Activated CD4-positive, alpha-beta memory T cell treated with anti-CD3 and anti-CD28 coated beads for 36 hours (primary cell): ENCODE measurements at regions of chr11 and their contacts with region 1.

Region 1: DNA sequence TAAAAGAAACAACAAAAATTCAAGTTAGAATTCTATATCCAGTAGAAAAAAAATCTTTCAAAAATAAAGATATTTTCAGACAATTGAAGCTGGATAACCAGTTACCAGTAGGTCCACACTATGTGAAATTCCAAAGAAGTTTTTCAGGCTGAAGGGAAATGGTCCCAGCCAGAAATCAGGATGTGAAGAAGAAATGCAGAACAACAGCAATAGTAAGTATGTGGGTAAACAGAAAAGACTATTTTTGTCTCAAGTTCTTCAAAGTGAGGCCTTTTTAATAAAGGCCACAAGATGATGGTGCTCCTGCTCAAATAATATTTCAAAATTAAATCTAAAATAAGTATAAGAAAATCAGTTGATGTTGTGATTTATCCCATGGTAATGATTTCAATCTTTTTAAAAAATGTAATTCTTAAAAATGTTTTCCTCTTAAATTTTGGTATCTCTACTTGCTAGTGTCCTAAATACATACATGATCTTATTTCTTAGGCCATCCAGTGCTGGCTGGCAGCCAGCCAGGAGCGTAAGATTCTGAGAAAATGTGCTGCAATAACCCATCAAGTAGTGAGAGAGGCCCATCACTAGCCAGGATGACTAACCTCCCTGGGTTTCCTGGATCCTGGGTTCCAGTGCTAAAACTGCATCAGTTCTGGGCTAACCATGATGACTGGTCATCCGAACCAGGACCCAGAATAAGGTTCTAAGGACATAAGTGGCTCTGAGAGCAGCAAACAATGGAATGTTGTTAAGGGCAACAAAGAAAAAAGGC is 15.6 kb upstream of the UCP3 start:
- DNase-seq: peak; percentile 83
- H3K4me3 Mint-ChIP-seq: no peak overlapping the region
- H3K27ac Mint-ChIP-seq: peak overlapping the region; percentile 61
- H3K4me1 Mint-ChIP-seq: peaks cover 38% of the 10 kb centered on the region
- H3K27me3 Mint-ChIP-seq: no peaks in the 10 kb centered on the region

Region 2: GRCh38 chr11:73671701-73672100 is 352.7 kb before region 1 on chr11:
- CTCF ChIA-PET with region 1: no interaction called
- POLR2A ChIA-PET with region 1: no interaction called
- intact Hi-C with region 1: no loop called
- DNase-seq: no peak
- H3K4me3 Mint-ChIP-seq: no peak overlapping the region
- H3K27ac Mint-ChIP-seq: no peak overlapping the region
- H3K4me1 Mint-ChIP-seq: no peaks in the 10 kb centered on the region
- H3K27me3 Mint-ChIP-seq: no peaks in the 10 kb centered on the region

Region 3: GRCh38 chr11:73916435-73916834 is 108.0 kb before region 1 on chr11:
- CTCF ChIA-PET with region 1: no interaction called
- POLR2A ChIA-PET with region 1: no interaction called
- intact Hi-C with region 1: no loop called
- DNase-seq: no peak
- H3K4me3 Mint-ChIP-seq: no peak overlapping the region
- H3K27ac Mint-ChIP-seq: no peak overlapping the region
- H3K4me1 Mint-ChIP-seq: no peaks in the 10 kb centered on the region
- H3K27me3 Mint-ChIP-seq: no peaks in the 10 kb centered on the region

Region 4: GRCh38 chr11:73971175-73971719 is 53.2 kb before region 1 on chr11:
- CTCF ChIA-PET with region 1: no interaction called
- POLR2A ChIA-PET with region 1: interaction called, 19 read pairs
- intact Hi-C with region 1: no loop called
- DNase-seq: peak; percentile 19
- H3K4me3 Mint-ChIP-seq: no peak overlapping the region
- H3K27ac Mint-ChIP-seq: peak overlapping the region; percentile 71
- H3K4me1 Mint-ChIP-seq: peaks cover 72% of the 10 kb centered on the region
- H3K27me3 Mint-ChIP-seq: no peaks in the 10 kb centered on the region

Region 5: GRCh38 chr11:73995247-73995646 is 29.2 kb before region 1 on chr11:
- CTCF ChIA-PET with region 1: interaction called, 7 read pairs
- POLR2A ChIA-PET with region 1: interaction called, 21 read pairs
- intact Hi-C with region 1: loop called (anchors 1 kb)
- DNase-seq: no peak
- H3K4me3 Mint-ChIP-seq: peak overlapping the region; percentile 49
- H3K27ac Mint-ChIP-seq: peak overlapping the region; percentile 91
- H3K4me1 Mint-ChIP-seq: peaks cover 75% of the 10 kb centered on the region
- H3K27me3 Mint-ChIP-seq: no peaks in the 10 kb centered on the region

Region 6: DNA sequence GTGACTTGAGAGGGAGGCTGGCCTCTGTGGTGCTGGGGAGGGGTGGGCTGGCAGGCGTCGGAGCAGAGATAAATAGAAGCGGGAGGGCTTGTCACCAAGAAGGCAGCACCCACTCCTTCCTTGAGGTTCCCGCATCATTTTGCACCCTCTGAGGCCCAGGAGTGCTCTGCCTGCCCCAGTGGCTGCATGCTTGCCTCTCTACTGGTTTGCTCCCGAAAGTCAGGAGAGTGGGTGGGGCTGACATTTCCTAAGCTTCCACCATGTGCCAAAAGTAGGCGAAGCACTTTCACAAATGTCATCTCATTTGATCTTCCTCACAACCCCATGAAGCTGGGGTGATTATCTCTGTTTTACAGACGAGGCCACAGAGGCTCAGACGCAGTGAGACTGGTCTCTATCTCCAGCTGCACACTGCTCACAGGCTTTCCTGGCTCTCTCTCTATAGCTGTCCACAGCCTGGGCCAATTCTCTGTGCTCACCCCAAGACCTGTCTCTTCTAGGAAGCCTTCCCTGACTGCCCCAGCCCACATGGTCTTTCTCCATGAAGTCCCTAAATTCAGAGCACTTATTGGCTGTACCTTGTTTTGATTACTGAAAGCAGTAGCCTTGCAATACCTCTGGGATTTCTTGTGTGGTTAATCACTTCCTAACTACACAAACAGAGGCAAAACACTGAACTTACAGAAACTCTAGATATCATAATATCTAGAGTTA is 12.9 kb before region 1 on chr11:
- CTCF ChIA-PET with region 1: interaction called, 3 read pairs
- POLR2A ChIA-PET with region 1: interaction called, 12 read pairs
- intact Hi-C with region 1: loop called (anchors 1 kb)
- DNase-seq: peak; percentile 84
- H3K4me3 Mint-ChIP-seq: peak overlapping the region; percentile 24
- H3K27ac Mint-ChIP-seq: peak overlapping the region; percentile 95
- H3K4me1 Mint-ChIP-seq: peaks cover 86% of the 10 kb centered on the region
- H3K27me3 Mint-ChIP-seq: no peaks in the 10 kb centered on the region

Region 7: GRCh38 chr11:74085542-74085892 is 61.1 kb after region 1 on chr11:
- CTCF ChIA-PET with region 1: no interaction called
- POLR2A ChIA-PET with region 1: no interaction called
- intact Hi-C with region 1: loop called (anchors 5 kb)
- DNase-seq: no peak
- H3K4me3 Mint-ChIP-seq: no peak overlapping the region
- H3K27ac Mint-ChIP-seq: peak overlapping the region; percentile 34
- H3K4me1 Mint-ChIP-seq: peaks cover 9% of the 10 kb centered on the region
- H3K27me3 Mint-ChIP-seq: no peaks in the 10 kb centered on the region